B cell (primary cell): ENCODE measurements at regions of chr13 and their contacts with region 1.

Region 1: GRCh38 chr13:27362064-27362883 is 62.1 kb upstream of the GTF3A start:
- DNase-seq: peak; percentile 85
- ATAC-seq: peak; percentile 91
- H3K4me3 ChIP-seq: peak overlapping the region in 4 of 5 experiments; percentile 28 to 56 (median 42)
- H3K4me3 Mint-ChIP-seq: peak overlapping the region; percentile 49
- H3K27ac ChIP-seq: no peak overlapping the region
- H3K27ac Mint-ChIP-seq: no peak overlapping the region
- H3K4me1 ChIP-seq: peaks cover 10% of the 10 kb centered on the region in 2 donors
- H3K4me1 Mint-ChIP-seq: peaks cover 12% of the 10 kb centered on the region
- H3K27me3 ChIP-seq: peaks cover 0 to 30% (median 11%) of the 10 kb centered on the region in 4 experiments
- H3K27me3 Mint-ChIP-seq: peaks cover 22% of the 10 kb centered on the region
- CTCF ChIP-seq: peak; percentile 87

Region 2: GRCh38 chr13:27171827-27172494 is 190.3 kb before region 1 on chr13:
- CTCF ChIA-PET with region 1: interaction called, 4 read pairs
- POLR2A ChIA-PET with region 1: no interaction called
- intact Hi-C with region 1: loop called (anchors 2 kb)
- DNase-seq: peak; percentile 95
- ATAC-seq: peak; percentile 88
- H3K4me3 ChIP-seq: peak overlapping the region; percentile 61 to 86 (median 83)
- H3K4me3 Mint-ChIP-seq: peak overlapping the region; percentile 86
- H3K27ac ChIP-seq: peak overlapping the region; percentile 92 to 94
- H3K27ac Mint-ChIP-seq: peak overlapping the region; percentile 95
- H3K4me1 ChIP-seq: peaks cover 43 to 54% of the 10 kb centered on the region in 2 donors
- H3K4me1 Mint-ChIP-seq: peaks cover 67% of the 10 kb centered on the region
- H3K27me3 ChIP-seq: no peaks in the 10 kb centered on the region
- H3K27me3 Mint-ChIP-seq: no peaks in the 10 kb centered on the region
- CTCF ChIP-seq: no peak

Region 3: GRCh38 chr13:27339299-27339698 is 23.0 kb before region 1 on chr13:
- CTCF ChIA-PET with region 1: interaction called, 19 read pairs
- POLR2A ChIA-PET with region 1: no interaction called
- intact Hi-C with region 1: no loop called
- DNase-seq: peak; percentile 57
- ATAC-seq: peak; percentile 62
- H3K4me3 ChIP-seq: no peak overlapping the region
- H3K4me3 Mint-ChIP-seq: no peak overlapping the region
- H3K27ac ChIP-seq: no peak overlapping the region
- H3K27ac Mint-ChIP-seq: no peak overlapping the region
- H3K4me1 ChIP-seq: peaks cover 0 to 6% of the 10 kb centered on the region in 2 donors
- H3K4me1 Mint-ChIP-seq: no peaks in the 10 kb centered on the region
- H3K27me3 ChIP-seq: peaks cover 0 to 5% (median 1%) of the 10 kb centered on the region in 4 experiments
- H3K27me3 Mint-ChIP-seq: no peaks in the 10 kb centered on the region
- CTCF ChIP-seq: peak; percentile 68

Region 4: DNA sequence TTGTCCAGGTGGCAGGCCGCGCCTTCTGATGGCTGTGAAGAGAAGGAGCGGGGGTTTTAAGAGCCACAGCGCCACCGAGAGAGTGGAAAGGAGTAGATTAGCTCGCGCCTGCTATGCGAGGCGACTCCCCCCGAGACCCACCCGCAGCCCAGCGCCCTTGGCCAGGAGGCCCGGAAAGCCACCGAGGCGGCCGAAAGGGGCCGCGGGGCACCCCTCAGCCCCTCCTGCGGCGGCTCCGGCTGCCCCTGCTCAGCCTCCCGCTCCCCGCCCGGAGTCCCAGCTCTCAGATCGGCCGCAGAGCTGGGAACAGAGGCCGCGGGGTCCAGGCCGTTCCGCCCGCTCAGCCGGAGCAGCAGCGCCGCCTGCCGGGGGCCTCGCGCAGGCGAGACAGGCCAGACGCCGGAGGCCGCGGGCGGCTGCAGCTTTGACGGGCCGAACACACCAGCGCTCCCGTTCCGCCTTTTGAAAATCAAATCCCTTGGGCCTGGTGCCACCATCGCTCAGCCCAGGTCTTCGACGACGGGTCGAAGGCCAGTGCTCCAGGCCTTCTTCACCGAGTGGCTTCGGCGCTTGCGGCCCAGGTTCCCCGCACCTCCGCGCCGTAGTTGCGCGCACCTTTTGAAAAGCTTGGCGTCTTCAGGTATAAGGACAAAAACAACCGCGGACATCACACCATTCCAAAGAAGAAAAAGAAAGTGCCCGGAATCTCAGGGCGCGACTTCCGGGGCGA is 591.6 kb after region 1 on chr13:
- CTCF ChIA-PET with region 1: interaction called, 15 read pairs
- POLR2A ChIA-PET with region 1: no interaction called
- intact Hi-C with region 1: no loop called
- DNase-seq: peak; percentile 81
- ATAC-seq: peak; percentile 88
- H3K4me3 ChIP-seq: peak overlapping the region in 4 of 5 experiments; percentile 31 to 53 (median 43)
- H3K4me3 Mint-ChIP-seq: peak overlapping the region; percentile 86
- H3K27ac ChIP-seq: no peak overlapping the region
- H3K27ac Mint-ChIP-seq: no peak overlapping the region
- H3K4me1 ChIP-seq: peaks cover 21 to 25% of the 10 kb centered on the region in 2 donors
- H3K4me1 Mint-ChIP-seq: peaks cover 15% of the 10 kb centered on the region
- H3K27me3 ChIP-seq: peaks cover 0 to 58% (median 44%) of the 10 kb centered on the region in 4 experiments
- H3K27me3 Mint-ChIP-seq: peaks cover 74% of the 10 kb centered on the region
- CTCF ChIP-seq: peak; percentile 86